ENCODE measurements at regions of chr1 and their contacts with region 1.

Region 1: DNA sequence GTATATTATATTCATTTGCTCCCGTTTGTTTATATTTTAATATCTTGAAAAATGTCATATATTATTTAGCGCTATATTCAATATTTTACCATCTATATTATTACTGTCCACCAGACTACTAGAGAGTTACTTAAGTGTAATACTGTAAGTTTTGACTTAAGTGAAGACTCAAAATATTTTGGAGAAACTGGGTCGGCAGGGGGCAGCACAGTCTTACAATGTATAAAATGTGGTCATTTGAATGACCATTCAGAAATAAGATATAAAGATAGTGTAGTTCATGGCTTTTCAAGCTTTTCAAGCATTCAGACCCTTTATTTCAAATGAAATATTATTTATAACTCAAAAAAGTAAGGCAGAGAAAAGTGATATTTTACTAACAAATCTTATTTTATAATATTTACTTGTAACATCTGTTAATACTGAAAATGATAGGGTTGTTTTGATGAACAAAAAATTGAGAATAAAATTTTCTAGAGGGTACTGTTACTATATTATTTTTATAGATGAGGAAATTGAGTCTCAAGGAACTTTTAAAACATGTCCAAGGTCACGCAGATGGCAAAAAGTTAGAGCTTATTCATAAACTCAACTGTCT is 89.0 kb upstream of the SERTAD4 start:
- DNase-seq: peak; percentile 83 to 95 (median 85)
- ATAC-seq: peak in 1 of 2 donors; percentile 36
- H3K4me3 ChIP-seq: no peak overlapping the region
- H3K27ac ChIP-seq: no peak overlapping the region
- H3K4me1 ChIP-seq: no peaks in the 10 kb centered on the region
- H3K27me3 ChIP-seq: no peaks in the 10 kb centered on the region

Region 2: GRCh38 chr1:210272666-210273065 is 129.1 kb after region 1 on chr1:
- intact Hi-C with region 1: no loop called
- DNase-seq: no peak
- ATAC-seq: no peak
- H3K4me3 ChIP-seq: no peak overlapping the region
- H3K27ac ChIP-seq: no peak overlapping the region
- H3K4me1 ChIP-seq: no peaks in the 10 kb centered on the region
- H3K27me3 ChIP-seq: no peaks in the 10 kb centered on the region

Region 3: GRCh38 chr1:210291081-210291764 is 147.7 kb after region 1 on chr1:
- intact Hi-C with region 1: no loop called
- DNase-seq: no peak
- ATAC-seq: no peak
- H3K4me3 ChIP-seq: no peak overlapping the region
- H3K27ac ChIP-seq: peak overlapping the region; percentile 22
- H3K4me1 ChIP-seq: peaks cover 2% of the 10 kb centered on the region
- H3K27me3 ChIP-seq: no peaks in the 10 kb centered on the region

Region 4: DNA sequence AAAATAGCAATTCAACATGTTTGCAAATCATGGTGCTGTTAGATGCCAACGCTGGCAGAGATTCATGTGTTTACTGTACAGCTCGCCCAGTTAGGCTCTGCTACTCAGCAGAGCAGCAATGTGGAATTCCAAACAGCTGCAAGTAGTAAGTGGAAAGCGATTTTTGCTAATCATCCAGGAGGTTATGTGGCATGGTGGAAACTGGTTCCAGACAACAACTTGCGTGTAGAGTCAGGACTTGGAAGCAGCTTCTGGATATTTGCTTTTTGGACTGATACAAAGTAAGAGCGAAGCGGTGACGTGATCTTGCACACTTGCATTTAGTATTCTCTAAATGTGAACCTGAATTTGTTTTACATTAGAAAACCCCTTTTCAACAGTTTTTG is 158.0 kb after region 1 on chr1:
- intact Hi-C with region 1: loop called in 1 of 4 experiments (anchors 5 kb)
- DNase-seq: peak in 1 of 3 donors; percentile 50
- ATAC-seq: peak; percentile 20 to 43
- H3K4me3 ChIP-seq: no peak overlapping the region
- H3K27ac ChIP-seq: no peak overlapping the region
- H3K4me1 ChIP-seq: peaks cover 3% of the 10 kb centered on the region
- H3K27me3 ChIP-seq: no peaks in the 10 kb centered on the region

Region 5: DNA sequence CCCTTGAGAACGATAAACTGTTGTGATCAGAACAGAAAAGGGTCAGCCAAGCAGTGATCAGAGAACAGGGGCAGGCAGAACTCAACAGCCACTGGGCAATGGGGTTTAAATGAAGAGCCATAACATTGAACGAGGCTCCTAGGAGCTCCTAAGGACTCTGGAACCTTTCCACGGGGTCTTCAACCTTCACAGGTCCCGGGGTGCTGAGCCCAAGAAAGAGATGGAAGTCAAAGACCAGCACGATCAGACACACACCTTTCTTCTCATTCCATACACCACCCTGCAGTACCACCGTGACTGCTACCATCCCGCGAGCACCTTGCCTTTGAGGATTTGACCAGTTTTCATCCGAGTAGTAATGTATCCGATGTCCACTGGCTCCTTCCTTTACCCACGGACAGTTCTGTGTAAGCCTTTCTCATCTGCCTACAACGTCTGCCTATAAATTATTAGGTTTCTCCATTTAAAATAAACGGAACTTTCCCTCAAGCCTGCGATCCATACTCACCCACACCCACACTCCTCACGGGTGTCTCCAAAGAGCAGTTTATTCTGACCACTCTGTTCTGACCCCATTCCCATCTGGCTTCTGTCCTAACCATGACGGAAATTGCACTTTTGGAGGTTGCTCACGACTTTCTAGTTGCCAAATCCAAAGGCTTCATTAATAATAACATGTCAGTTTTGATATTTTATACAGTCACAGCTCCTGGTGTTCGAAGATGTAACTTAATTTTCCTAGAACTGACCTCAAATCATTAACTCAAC is 168.3 kb after region 1 on chr1:
- intact Hi-C with region 1: loop called (anchors 5 kb)
- DNase-seq: peak in 1 of 3 donors; percentile 63
- ATAC-seq: peak; percentile 76 to 84
- H3K4me3 ChIP-seq: no peak overlapping the region
- H3K27ac ChIP-seq: peak overlapping the region; percentile 79
- H3K4me1 ChIP-seq: no peaks in the 10 kb centered on the region
- H3K27me3 ChIP-seq: no peaks in the 10 kb centered on the region

Region 6: GRCh38 chr1:210400043-210400840 is 256.7 kb after region 1 on chr1:
- intact Hi-C with region 1: loop called in 3 of 4 experiments (anchors 5 kb)
- DNase-seq: peak; percentile 44 to 74 (median 68)
- ATAC-seq: peak; percentile 91 to 94
- H3K4me3 ChIP-seq: no peak overlapping the region
- H3K27ac ChIP-seq: no peak overlapping the region
- H3K4me1 ChIP-seq: peaks cover 2% of the 10 kb centered on the region
- H3K27me3 ChIP-seq: no peaks in the 10 kb centered on the region

Measured in right cardiac atrium (tissue), 5 donors.